ENCODE measurements at regions of chr6 and their contacts with region 1.

Region 1: DNA sequence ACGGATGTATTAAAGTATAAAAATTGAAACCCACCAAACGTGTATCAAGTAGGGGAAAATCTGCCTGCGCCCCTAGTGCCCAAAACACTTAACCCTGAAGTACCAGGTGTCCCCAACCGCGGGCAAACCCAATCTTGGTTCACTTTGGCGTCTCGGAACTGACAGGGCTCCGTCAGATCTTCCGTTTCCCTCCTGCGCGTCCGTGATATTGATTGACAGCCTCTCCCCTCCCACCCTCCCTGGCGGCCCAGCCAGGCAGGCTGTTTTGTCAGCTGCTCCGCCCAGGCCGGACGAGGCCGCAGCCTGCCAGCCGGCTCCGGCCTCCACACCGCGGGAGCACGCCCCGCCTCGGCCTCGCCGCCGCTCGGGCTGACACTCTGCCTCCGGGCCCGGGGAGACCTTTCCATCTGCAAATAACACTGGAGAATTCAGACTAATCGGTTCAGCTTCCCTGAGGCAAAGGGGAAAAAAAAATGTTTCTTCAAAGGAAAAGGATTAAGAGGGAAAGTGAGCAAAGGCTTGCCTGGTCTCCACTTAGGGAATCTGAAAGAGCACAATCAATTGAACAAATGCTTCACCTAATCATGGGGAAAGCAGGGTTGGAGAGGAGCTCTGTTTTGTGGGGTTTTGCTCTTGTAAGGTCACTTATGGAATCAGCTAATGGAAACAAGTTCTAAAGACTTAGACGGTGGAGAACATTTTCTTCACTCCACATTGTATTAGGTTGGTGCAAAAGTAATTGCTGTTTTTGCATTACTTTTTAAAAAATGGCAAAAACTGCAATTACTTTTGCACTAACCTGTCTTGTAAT is 235.0 kb upstream of the MCHR2 start:
- DNase-seq: peak; percentile 57
- ATAC-seq: peak; percentile 98
- H3K4me3 ChIP-seq: peak overlapping the region; percentile 63
- H3K27ac ChIP-seq: peak overlapping the region; percentile 76
- H3K4me1 ChIP-seq: peaks cover 2% of the 10 kb centered on the region; the same call in 1 of the 2 replicates
- H3K27me3 ChIP-seq: no peaks in the 10 kb centered on the region
- CTCF ChIP-seq: peak; percentile 16; the same call in 1 of the 2 replicates
- POLR2A ChIP-seq: no peak
- RAD21 ChIP-seq: no peak

Region 2: GRCh38 chr6:100001915-100002388 is 227.1 kb before region 1 on chr6:
- CTCF ChIA-PET with region 1: no interaction called
- POLR2A ChIA-PET with region 1: no interaction called
- dilution Hi-C with region 1: no loop called
- in situ Hi-C with region 1: no loop called
- intact Hi-C with region 1: no loop called
- DNase-seq: peak; percentile 60
- ATAC-seq: peak; percentile 98
- H3K4me3 ChIP-seq: no peak overlapping the region
- H3K27ac ChIP-seq: no peak overlapping the region
- H3K4me1 ChIP-seq: no peaks in the 10 kb centered on the region
- H3K27me3 ChIP-seq: peaks cover 27% of the 10 kb centered on the region
- CTCF ChIP-seq: peak; percentile 90
- POLR2A ChIP-seq: no peak
- RAD21 ChIP-seq: peak; percentile 77

Region 3: DNA sequence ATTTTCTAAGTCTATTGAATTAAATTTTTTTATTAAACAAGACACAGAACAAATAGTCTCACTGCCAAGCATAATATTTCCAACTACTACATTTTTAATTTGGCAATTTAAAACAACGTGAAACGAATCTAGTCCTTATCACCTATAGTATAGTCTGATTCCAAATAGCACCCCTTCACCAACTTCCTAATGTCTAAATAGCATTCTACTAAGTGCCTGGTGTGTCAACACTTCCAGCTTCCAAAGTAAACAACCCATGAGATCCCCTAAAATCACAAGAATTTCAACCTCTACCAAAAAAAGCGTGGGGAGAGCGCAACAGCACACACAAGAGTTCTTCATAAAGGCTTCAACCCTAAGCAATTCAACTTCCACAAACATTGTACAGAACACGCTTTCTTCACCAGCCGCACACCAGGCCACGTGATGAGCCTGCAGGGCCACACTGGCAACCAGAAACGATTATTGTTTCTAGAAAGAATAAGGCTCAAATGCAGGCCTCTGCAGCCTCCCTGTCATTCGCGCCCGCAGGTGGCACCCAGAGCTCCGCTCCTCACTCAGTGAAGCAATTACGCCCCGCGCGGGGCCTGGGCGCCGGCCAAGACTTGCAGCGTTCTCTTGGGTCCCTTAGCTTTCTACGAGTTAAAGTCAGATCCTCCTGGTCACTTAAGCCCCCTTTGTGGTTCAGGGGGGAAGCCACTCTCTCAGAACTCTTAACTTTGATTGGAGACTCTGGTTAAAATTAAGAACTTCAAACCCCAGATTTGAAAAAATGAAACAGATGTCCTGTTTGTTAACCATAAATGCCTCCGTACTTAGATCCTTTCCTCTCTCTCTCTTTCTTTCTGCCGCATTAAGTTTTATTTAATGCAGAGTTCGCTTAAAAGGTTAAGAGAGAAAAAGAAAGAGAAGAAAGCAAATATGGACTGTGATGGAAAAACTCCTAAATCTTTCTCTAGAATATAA is 217.4 kb after region 1 on chr6:
- CTCF ChIA-PET with region 1: no interaction called
- POLR2A ChIA-PET with region 1: no interaction called
- dilution Hi-C with region 1: no loop called
- in situ Hi-C with region 1: no loop called
- intact Hi-C with region 1: loop called (anchors 5 kb)
- DNase-seq: no peak
- ATAC-seq: no peak
- H3K4me3 ChIP-seq: no peak overlapping the region
- H3K27ac ChIP-seq: no peak overlapping the region
- H3K4me1 ChIP-seq: peaks cover 2% of the 10 kb centered on the region; the same call in 1 of the 2 replicates
- H3K27me3 ChIP-seq: peaks cover 79% of the 10 kb centered on the region
- CTCF ChIP-seq: no peak
- POLR2A ChIP-seq: no peak
- RAD21 ChIP-seq: no peak